Motor neuron (in vitro differentiated cells): ENCODE measurements at regions of chr2 and their contacts with region 1.

Region 1: DNA sequence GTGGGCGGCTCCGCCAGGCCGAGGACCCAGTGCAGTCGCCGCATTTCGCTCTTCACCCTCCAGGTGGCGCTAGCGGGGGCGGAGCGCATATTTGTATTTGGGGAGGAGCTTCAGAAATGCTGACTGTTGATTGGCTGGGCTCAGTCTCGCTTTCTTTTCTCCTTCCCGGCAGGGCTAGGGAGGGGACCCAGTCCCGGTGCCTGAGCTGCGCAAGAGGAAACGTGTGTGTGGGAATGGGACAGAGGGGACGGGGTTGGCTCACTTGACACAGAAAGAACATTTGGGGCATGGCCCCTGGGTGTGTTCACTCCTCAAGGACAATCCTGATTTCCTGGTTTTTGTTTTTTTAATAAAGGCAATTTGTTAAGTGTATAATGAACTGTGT is 20.3 kb upstream of the DNMT3A start:
- ATAC-seq: peak; percentile 92 to 100 (median 99)
- H3K4me3 ChIP-seq: peak overlapping the region in 4 of 5 donors; percentile 11 to 31 (median 16)
- H3K27ac ChIP-seq: no peak overlapping the region
- H3K4me1 ChIP-seq: no peaks in the 10 kb centered on the region

Region 2: DNA sequence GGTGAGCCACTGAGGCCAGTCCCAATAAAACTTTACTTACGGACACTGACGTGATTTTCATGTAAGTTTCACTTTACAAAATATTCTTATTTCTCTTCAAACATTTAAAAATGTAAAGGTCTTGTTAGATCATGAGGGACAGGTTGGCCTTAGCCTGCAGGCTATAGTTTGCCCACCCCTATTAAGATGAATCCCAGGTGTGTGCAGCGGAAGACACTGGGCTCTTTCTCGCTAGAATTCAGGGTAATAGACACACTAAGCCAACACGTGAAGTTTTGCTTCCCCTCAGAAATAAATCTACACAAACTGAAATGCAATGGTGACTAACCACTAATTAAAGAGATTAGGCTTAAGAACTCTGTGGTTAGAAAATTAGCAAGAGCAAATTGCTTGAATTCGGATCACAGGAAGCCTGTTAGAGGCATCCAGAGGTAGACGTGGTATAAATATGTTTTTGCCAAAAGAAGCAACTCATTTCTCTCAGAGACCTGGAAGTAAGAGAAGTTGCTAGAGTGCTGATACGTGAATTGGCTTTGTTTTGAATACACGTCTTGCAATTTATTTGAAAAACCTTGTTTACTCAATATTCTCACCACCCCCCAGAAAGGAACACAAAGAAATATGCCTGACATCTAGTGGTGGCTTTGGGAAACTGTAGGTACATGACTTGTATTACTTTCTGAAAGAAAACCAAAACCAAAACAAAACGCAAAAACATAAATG is 159.8 kb after region 1 on chr2:
- in situ Hi-C with region 1: loop called in 1 of 9 experiments (anchors 25 kb)
- ATAC-seq: peak in 5 of 8 experiments; percentile 32 to 94 (median 91)
- H3K4me3 ChIP-seq: no peak overlapping the region
- H3K27ac ChIP-seq: no peak overlapping the region
- H3K4me1 ChIP-seq: no peaks in the 10 kb centered on the region

Region 3: DNA sequence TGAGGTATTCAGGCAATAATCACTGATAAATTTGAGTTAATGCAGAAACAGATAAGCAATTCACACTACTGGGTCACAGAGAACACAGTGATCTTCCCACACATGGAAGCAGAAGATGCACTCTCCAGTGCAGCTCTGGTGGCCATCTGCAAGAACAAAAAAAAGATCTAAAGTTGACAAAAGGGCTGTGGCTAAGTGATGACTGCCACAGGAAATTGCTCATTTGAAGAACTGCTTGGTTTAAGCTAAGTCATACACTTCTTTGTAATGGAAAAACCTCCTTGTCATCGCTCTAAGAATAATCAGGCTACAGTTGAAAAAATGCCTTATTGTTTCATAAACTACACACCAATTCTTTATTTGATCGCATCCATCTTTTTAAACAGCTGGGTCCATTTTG is 196.2 kb after region 1 on chr2:
- in situ Hi-C with region 1: no loop called
- ATAC-seq: peak; percentile 34 to 97 (median 62)
- H3K4me3 ChIP-seq: no peak overlapping the region
- H3K27ac ChIP-seq: no peak overlapping the region
- H3K4me1 ChIP-seq: peaks cover 3 to 18% of the 10 kb centered on the region in 2 donors

Region 4: DNA sequence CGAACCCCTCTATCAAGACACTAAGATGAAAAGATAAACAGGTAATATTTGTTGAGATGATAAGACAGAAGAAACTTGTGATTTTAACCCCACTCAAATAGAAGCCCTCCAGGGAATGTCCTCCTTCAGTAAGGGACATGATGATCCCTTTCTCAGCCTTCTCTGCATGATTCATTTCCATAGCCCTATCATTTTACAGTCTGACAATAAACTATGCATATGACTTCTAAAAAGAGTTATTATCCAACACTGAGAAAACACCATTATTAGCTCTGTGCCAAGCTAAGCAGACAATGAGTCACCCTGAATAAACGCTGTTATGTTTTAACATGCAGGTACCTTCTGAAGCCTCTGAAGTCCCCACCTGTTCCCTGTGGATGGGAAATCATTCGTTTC is 256.6 kb after region 1 on chr2:
- in situ Hi-C with region 1: no loop called
- ATAC-seq: peak in 5 of 8 experiments; percentile 65 to 97 (median 85)
- H3K4me3 ChIP-seq: no peak overlapping the region
- H3K27ac ChIP-seq: no peak overlapping the region
- H3K4me1 ChIP-seq: peaks cover 0 to 2% of the 10 kb centered on the region in 2 donors

Region 5: GRCh38 chr2:25856377-25856776 is 494.3 kb after region 1 on chr2:
- in situ Hi-C with region 1: no loop called
- ATAC-seq: no peak
- H3K4me3 ChIP-seq: no peak overlapping the region
- H3K27ac ChIP-seq: no peak overlapping the region
- H3K4me1 ChIP-seq: no peaks in the 10 kb centered on the region